CD8-positive, alpha-beta memory T cell (primary cell): ENCODE measurements at regions of chr5 and their contacts with region 1.

Region 1: GRCh38 chr5:41869739-41870626 is at the start of gene OXCT1:
- DNase-seq: peak; percentile 88 to 97 (median 93)
- H3K4me3 ChIP-seq: peak within 1 kb of the TSS; percentile 77
- H3K4me3 Mint-ChIP-seq: peak within 1 kb of the TSS; percentile 89 to 95 (median 91)
- H3K27ac ChIP-seq: peak within 1 kb of the TSS; percentile 90
- H3K27ac Mint-ChIP-seq: peak within 1 kb of the TSS; percentile 89 to 99 (median 98)
- H3K4me1 ChIP-seq: peaks cover 33% of the 10 kb centered on the region
- H3K4me1 Mint-ChIP-seq: peaks cover 44 to 65% (median 55%) of the 10 kb centered on the region in 3 donors
- H3K27me3 ChIP-seq: no peaks in the 10 kb centered on the region
- H3K27me3 Mint-ChIP-seq: no peaks in the 10 kb centered on the region
- total RNA-seq, gene OXCT1: 111 to 117 TPM

Region 2: DNA sequence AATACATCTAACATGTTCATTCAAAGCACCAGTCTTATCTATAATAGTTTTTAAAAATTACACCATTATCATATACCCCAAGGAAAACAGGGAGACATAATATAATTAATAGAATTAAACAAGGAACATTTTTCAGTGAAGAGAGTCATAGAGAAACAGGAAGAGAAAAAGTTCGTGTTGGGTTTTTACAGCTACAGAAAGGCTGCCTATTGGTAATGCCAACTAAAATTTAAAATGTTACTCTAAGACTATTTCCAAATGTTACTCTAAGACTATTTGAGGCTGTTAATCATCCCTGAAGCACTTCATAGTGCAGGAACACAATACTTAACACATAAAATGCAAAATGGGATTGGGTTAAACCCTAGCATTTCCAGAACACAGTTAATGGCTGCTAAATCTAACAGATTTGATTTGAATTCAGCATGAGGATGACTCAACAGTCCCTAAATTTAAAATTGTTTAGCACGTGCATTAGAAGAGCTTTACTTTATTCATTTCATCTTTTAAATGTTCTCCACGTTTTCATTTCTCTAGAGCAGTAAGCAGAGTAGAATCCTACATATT is 54.2 kb before region 1 on chr5:
- CTCF ChIA-PET with region 1: no interaction called
- POLR2A ChIA-PET with region 1: no interaction called
- DNase-seq: no peak
- H3K4me3 ChIP-seq: no peak overlapping the region
- H3K4me3 Mint-ChIP-seq: no peak overlapping the region
- H3K27ac ChIP-seq: no peak overlapping the region
- H3K27ac Mint-ChIP-seq: no peak overlapping the region
- H3K4me1 ChIP-seq: no peaks in the 10 kb centered on the region
- H3K4me1 Mint-ChIP-seq: peaks cover 33 to 73% (median 51%) of the 10 kb centered on the region in 3 donors
- H3K27me3 ChIP-seq: no peaks in the 10 kb centered on the region
- H3K27me3 Mint-ChIP-seq: no peaks in the 10 kb centered on the region

Region 3: GRCh38 chr5:41856644-41857491 is 13.1 kb before region 1 on chr5:
- CTCF ChIA-PET with region 1: interaction called, 16 read pairs
- POLR2A ChIA-PET with region 1: no interaction called
- DNase-seq: peak in 4 of 5 donors; percentile 26 to 67 (median 63)
- H3K4me3 ChIP-seq: no peak overlapping the region
- H3K4me3 Mint-ChIP-seq: no peak overlapping the region
- H3K27ac ChIP-seq: no peak overlapping the region
- H3K27ac Mint-ChIP-seq: peak overlapping the region in 1 of 8 donors; percentile 53
- H3K4me1 ChIP-seq: no peaks in the 10 kb centered on the region
- H3K4me1 Mint-ChIP-seq: peaks cover 6 to 21% (median 12%) of the 10 kb centered on the region in 3 donors
- H3K27me3 ChIP-seq: no peaks in the 10 kb centered on the region
- H3K27me3 Mint-ChIP-seq: no peaks in the 10 kb centered on the region

Region 4: GRCh38 chr5:41903892-41904799 is 34.2 kb after region 1 on chr5 and contains the start of gene RIMOC1:
- CTCF ChIA-PET with region 1: interaction called, 7 read pairs
- POLR2A ChIA-PET with region 1: interaction called, 30 read pairs
- DNase-seq: peak; percentile 95 to 99 (median 98)
- H3K4me3 ChIP-seq: peak within 1 kb of the TSS; percentile 91
- H3K4me3 Mint-ChIP-seq: peak within 1 kb of the TSS; percentile 95 to 99 (median 97)
- H3K27ac ChIP-seq: peak within 1 kb of the TSS; percentile 83
- H3K27ac Mint-ChIP-seq: peak within 1 kb of the TSS; percentile 97 to 99 (median 98)
- H3K4me1 ChIP-seq: peaks cover 27% of the 10 kb centered on the region
- H3K4me1 Mint-ChIP-seq: peaks cover 36 to 54% (median 49%) of the 10 kb centered on the region in 3 donors
- H3K27me3 ChIP-seq: no peaks in the 10 kb centered on the region
- H3K27me3 Mint-ChIP-seq: peaks cover 0 to 4% of the 10 kb centered on the region in 2 donors
- total RNA-seq, gene RIMOC1: 34.6 to 36.5 TPM

Region 5: DNA sequence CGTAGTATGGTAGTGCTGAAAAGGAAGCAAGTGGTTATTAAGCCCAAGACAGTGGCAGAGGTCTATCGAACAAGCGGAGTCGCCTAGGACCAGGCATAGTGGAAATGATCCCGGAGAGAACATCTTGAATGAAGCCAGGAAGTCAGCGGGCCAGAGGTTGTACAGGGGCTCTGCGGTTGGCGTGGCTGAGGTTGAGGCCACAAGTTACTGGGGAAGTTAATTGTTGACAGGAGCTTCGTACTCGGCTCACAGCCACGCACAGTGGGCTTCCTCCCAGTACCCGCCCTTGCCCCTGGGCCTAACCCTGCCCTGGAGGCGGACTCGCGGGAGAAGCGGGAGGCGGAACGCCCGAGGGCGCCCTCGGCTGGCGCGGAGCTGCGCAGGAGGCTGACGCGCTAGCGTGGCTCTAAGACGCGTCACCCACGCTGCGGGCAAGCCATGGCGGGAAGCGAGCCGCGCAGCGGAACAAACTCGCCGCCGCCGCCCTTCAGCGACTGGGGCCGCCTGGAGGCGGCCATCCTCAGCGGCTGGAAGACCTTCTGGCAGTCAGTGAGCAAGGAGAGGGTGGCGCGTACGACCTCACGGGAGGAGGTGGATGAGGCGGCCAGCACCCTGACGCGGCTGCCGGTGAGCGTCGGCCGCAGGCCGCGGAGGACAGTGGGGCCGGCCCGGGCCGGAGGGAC is 55.0 kb after region 1 on chr5 and contains the start of gene FBXO4:
- CTCF ChIA-PET with region 1: interaction called, 3 read pairs
- POLR2A ChIA-PET with region 1: interaction called, 13 read pairs
- DNase-seq: peak; percentile 79 to 93 (median 89)
- H3K4me3 ChIP-seq: peak within 1 kb of the TSS; percentile 78
- H3K4me3 Mint-ChIP-seq: peak within 1 kb of the TSS; percentile 72 to 96 (median 81)
- H3K27ac ChIP-seq: peak within 1 kb of the TSS; percentile 98
- H3K27ac Mint-ChIP-seq: peak within 1 kb of the TSS; percentile 84 to 99 (median 96)
- H3K4me1 ChIP-seq: peaks cover 12% of the 10 kb centered on the region
- H3K4me1 Mint-ChIP-seq: peaks cover 19 to 30% (median 25%) of the 10 kb centered on the region in 3 donors
- H3K27me3 ChIP-seq: no peaks in the 10 kb centered on the region
- H3K27me3 Mint-ChIP-seq: no peaks in the 10 kb centered on the region
- total RNA-seq, gene FBXO4: 15.8 to 18.0 TPM